Posterior vena cava (tissue), 2 donors: ENCODE measurements at regions of chr16 and their contacts with region 1.

Region 1: DNA sequence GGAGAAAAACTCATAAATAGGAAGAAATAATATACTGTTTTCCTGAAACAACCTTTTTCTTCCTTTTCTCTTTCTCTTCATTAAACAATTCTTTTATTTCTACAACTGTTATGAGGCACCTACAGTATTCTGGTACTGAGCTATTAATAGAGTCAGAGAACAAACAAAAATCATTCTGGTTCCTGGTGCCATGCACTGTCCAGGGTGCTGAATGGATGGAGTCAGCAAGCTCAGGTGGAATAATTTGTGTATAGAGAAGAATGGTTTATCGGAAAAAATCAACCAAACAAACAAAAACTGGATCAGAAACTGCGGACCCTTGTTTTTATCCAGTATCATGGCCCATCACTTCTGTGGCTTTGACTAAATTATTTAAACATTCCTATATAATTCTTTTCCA is 430.3 kb upstream of the GOT2 start:
- DNase-seq: no peak

Region 2: GRCh38 chr16:58866935-58867334 is 297.5 kb before region 1 on chr16:
- intact Hi-C with region 1: loop called in 1 of 2 experiments (anchors 5 kb)
- DNase-seq: no peak